Mammary epithelial cell (primary cell): ENCODE measurements at regions of chr5 and their contacts with region 1.

Region 1: GRCh38 chr5:83718195-83718825 is 2.3 kb downstream of the HAPLN1 start:
- DNase-seq: peak; percentile 35
- H3K4me3 ChIP-seq: no peak overlapping the region
- H3K27ac ChIP-seq: no peak overlapping the region
- H3K4me1 ChIP-seq: peaks cover 8% of the 10 kb centered on the region
- H3K27me3 ChIP-seq: no peaks in the 10 kb centered on the region
- CTCF ChIP-seq: peak; percentile 84 to 87

Region 2: GRCh38 chr5:83752700-83753099 is 34.4 kb after region 1 on chr5:
- CTCF ChIA-PET with region 1: no interaction called
- dilution Hi-C with region 1: no loop called
- in situ Hi-C with region 1: no loop called
- intact Hi-C with region 1: no loop called
- DNase-seq: no peak
- H3K4me3 ChIP-seq: no peak overlapping the region
- H3K27ac ChIP-seq: no peak overlapping the region
- H3K4me1 ChIP-seq: no peaks in the 10 kb centered on the region
- H3K27me3 ChIP-seq: no peaks in the 10 kb centered on the region
- CTCF ChIP-seq: no peak

Region 3: DNA sequence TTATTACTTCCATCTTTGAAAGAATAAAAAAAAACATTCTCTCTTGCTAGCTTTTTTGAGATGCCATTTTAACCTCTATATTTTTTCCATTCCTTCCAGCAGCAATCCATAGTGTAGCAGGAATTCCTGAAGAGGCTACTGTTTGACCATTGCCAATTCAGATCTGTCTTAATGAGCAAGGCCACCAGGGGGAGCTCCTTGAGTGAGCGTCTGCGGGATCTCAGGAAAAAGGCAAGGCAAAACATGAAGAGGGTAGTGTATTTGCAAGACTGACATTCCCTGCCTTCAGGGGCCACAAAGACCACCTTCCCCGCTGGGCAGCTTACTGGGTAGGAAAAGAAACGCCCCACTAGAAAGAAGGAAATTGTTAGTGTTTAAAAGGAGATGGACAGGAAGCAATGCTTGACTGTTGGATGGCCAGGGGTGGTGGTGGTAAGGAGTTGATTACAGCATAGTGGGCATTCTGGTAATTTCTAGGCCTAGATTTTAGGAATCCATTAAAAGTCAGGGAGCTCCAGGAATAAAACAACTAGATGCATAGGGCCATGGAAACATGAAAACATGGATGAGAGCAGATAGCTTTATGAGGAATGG is 208.9 kb after region 1 on chr5:
- CTCF ChIA-PET with region 1: no interaction called
- dilution Hi-C with region 1: no loop called
- in situ Hi-C with region 1: no loop called
- intact Hi-C with region 1: loop called (anchors 1 kb)
- DNase-seq: peak; percentile 23
- H3K4me3 ChIP-seq: no peak overlapping the region
- H3K27ac ChIP-seq: no peak overlapping the region
- H3K4me1 ChIP-seq: peaks cover 32% of the 10 kb centered on the region
- H3K27me3 ChIP-seq: no peaks in the 10 kb centered on the region
- CTCF ChIP-seq: peak; percentile 64 to 83

Region 4: GRCh38 chr5:84255315-84255714 is 537.0 kb after region 1 on chr5:
- CTCF ChIA-PET with region 1: no interaction called
- dilution Hi-C with region 1: no loop called
- in situ Hi-C with region 1: loop called (anchors 10 kb)
- intact Hi-C with region 1: loop called (anchors 1 kb)
- DNase-seq: peak; percentile 31
- H3K4me3 ChIP-seq: no peak overlapping the region
- H3K27ac ChIP-seq: no peak overlapping the region
- H3K4me1 ChIP-seq: no peaks in the 10 kb centered on the region
- H3K27me3 ChIP-seq: no peaks in the 10 kb centered on the region
- CTCF ChIP-seq: peak; percentile 30 to 59

Region 5: GRCh38 chr5:84274585-84275468 is 556.5 kb after region 1 on chr5:
- CTCF ChIA-PET with region 1: no interaction called
- dilution Hi-C with region 1: no loop called
- in situ Hi-C with region 1: no loop called
- intact Hi-C with region 1: loop called (anchors 5 kb)
- DNase-seq: peak; percentile 14
- H3K4me3 ChIP-seq: no peak overlapping the region
- H3K27ac ChIP-seq: no peak overlapping the region
- H3K4me1 ChIP-seq: no peaks in the 10 kb centered on the region
- H3K27me3 ChIP-seq: peaks cover 3% of the 10 kb centered on the region
- CTCF ChIP-seq: peak; percentile 50 to 62

Region 6: GRCh38 chr5:84437673-84438315 is 719.5 kb after region 1 on chr5:
- CTCF ChIA-PET with region 1: no interaction called
- dilution Hi-C with region 1: no loop called
- in situ Hi-C with region 1: loop called in 1 of 2 experiments (anchors 25 kb)
- intact Hi-C with region 1: no loop called
- DNase-seq: peak; percentile 81
- H3K4me3 ChIP-seq: no peak overlapping the region
- H3K27ac ChIP-seq: no peak overlapping the region
- H3K4me1 ChIP-seq: peaks cover 15% of the 10 kb centered on the region
- H3K27me3 ChIP-seq: peaks cover 10% of the 10 kb centered on the region
- CTCF ChIP-seq: no peak

Region 7: DNA sequence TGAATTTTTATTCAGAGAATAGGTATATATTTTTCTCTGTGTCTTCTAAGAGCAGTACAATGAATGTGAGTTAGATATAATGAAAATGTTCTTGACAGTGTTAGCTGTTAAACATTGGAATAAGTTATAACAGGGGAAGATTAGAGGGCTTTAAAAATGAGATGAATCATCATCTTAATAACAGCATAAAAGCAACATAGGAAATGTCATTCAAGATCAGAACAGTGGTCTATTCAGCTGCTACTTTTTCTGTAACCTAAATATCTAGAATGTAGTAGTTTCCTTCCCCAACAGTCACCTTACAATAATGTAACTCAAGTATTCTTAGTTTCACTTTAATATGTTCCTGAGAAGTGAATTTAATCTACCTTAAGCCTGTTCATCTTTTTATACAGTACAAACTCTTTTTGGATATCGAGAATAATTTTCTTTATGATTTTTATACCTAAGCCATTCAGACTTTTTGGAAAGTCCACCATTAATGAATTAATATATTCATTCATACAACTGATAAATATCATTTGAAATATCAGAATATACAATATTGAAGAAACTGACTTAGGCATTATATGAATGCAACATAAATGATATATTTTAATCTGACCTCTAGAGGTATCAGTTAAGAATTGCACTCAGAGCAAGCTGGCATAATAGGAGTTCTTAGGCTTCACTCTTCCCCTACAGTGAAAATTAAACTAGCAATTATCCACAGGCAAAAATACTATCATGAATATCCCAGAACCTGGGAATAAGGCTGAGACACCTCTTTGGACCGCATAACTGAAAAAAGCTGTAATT is 732.5 kb after region 1 on chr5:
- CTCF ChIA-PET with region 1: no interaction called
- dilution Hi-C with region 1: no loop called
- in situ Hi-C with region 1: loop called in 1 of 2 experiments (anchors 25 kb)
- intact Hi-C with region 1: loop called (anchors 5 kb)
- DNase-seq: no peak
- H3K4me3 ChIP-seq: no peak overlapping the region
- H3K27ac ChIP-seq: no peak overlapping the region
- H3K4me1 ChIP-seq: no peaks in the 10 kb centered on the region
- H3K27me3 ChIP-seq: peaks cover 4% of the 10 kb centered on the region
- CTCF ChIP-seq: peak; percentile 51 to 55

Region 8: DNA sequence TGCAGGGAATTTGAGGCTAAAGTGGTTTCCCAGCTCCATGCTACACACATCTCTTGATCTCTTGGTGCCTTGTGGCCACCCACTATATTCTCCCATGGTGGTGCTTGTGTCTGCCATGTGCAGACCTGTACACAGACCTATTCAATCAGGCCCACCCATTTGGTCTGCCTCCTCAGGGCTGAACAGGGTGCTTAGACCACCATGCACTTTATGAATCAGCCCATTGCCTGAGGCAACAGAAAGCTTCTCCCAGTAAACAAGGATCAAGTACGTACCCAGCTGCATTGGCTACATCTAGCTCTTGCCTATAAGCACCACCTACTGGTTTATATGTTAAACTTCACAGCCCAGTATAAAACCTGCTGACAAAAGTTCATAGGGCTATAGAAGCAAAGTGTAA is 1330.7 kb after region 1 on chr5:
- CTCF ChIA-PET with region 1: no interaction called
- dilution Hi-C with region 1: no loop called
- in situ Hi-C with region 1: no loop called
- intact Hi-C with region 1: loop called (anchors 1 kb)
- DNase-seq: peak; percentile 35
- H3K4me3 ChIP-seq: no peak overlapping the region
- H3K27ac ChIP-seq: no peak overlapping the region
- H3K4me1 ChIP-seq: no peaks in the 10 kb centered on the region
- H3K27me3 ChIP-seq: peaks cover 2% of the 10 kb centered on the region
- CTCF ChIP-seq: peak; percentile 35 to 62